Colonic mucosa (tissue), 4 donors: ENCODE measurements at regions of chr14 and their contacts with region 1.

Region 1: DNA sequence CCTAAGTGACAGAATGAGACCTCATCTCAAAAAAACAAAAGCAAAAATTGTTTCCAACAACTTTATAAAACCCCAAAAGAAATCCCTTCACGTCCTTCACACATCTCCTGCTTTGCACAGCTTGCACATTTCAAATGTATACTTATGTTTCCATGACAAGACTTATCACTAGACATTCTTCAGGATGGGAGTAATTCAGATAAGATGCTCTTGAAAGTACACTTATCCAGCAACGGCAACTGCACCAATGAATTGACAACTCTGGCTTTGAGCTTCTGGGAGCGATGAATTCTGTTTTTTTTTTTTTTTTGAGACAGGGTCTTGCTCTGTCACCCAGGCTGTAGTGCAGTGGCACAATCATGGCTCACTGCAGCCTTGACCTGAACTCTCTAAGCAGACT is 30.8 kb upstream of the AKAP5 start:
- DNase-seq: no peak
- H3K4me3 ChIP-seq: no peak overlapping the region
- H3K27ac ChIP-seq: no peak overlapping the region
- H3K4me1 ChIP-seq: no peaks in the 10 kb centered on the region
- H3K27me3 ChIP-seq: no peaks in the 10 kb centered on the region
- CTCF ChIP-seq: no peak

Region 2: GRCh38 chr14:64340560-64341196 is 93.8 kb before region 1 on chr14:
- intact Hi-C with region 1: loop called (anchors 5 kb)
- DNase-seq: no peak
- H3K4me3 ChIP-seq: no peak overlapping the region
- H3K27ac ChIP-seq: no peak overlapping the region
- H3K4me1 ChIP-seq: no peaks in the 10 kb centered on the region
- H3K27me3 ChIP-seq: no peaks in the 10 kb centered on the region
- CTCF ChIP-seq: no peak

Region 3: DNA sequence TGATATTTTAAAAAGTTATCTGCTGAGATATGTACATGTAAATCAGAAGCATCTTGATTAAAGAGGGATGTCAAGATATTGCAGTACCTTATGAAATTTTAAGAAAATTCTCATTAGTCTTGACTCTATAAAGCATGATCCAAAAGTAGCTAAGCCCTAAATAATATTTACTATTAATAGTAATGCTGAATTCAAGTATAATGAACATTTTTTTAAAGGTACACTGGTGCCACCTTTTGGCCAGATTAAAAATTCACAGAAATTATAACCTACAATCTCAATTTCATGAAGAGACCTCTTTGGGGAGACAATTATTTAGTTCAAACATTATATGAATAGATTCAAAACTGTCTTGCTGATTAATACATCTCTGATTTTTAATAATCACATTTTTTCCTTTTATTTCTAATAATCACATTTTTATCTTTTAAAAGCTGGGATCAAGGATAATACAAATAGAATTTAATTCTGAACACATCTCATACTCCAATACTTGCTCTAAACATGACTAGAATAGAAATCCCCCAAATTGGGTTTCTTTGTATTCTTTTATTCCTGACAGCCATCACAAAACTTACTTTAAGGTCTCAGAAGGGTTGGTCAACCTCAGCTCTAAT is 44.2 kb after region 1 on chr14:
- intact Hi-C with region 1: loop called (anchors 5 kb)
- DNase-seq: no peak
- H3K4me3 ChIP-seq: no peak overlapping the region
- H3K27ac ChIP-seq: no peak overlapping the region
- H3K4me1 ChIP-seq: no peaks in the 10 kb centered on the region
- H3K27me3 ChIP-seq: no peaks in the 10 kb centered on the region
- CTCF ChIP-seq: no peak